ENCODE measurements at regions of chr10 and their contacts with region 1.

Region 1: GRCh38 chr10:103244663-103245271 is 920 bp upstream of the RPEL1 start:
- DNase-seq: peak; percentile 50 to 79
- ATAC-seq: peak; percentile 69 to 82
- H3K4me3 ChIP-seq: no peak overlapping the region
- H3K27ac ChIP-seq: no peak overlapping the region
- H3K4me1 ChIP-seq: peaks cover 19% of the 10 kb centered on the region in 2 donors
- H3K27me3 ChIP-seq: no peaks in the 10 kb centered on the region
- CTCF ChIP-seq: peak; percentile 90 to 91 (median 91)
- POLR2A ChIP-seq: no peak

Region 2: GRCh38 chr10:102713814-102714620 is 530.8 kb before region 1 on chr10 and contains the start of gene ARL3:
- in situ Hi-C with region 1: no loop called
- intact Hi-C with region 1: loop called (anchors 5 kb)
- DNase-seq: peak; percentile 96 to 97
- ATAC-seq: peak; percentile 88
- H3K4me3 ChIP-seq: peak within 1 kb of the TSS; percentile 74 to 99 (median 91)
- H3K27ac ChIP-seq: peak within 1 kb of the TSS; percentile 83 to 89 (median 86)
- H3K4me1 ChIP-seq: peaks cover 26 to 28% of the 10 kb centered on the region in 2 donors
- H3K27me3 ChIP-seq: no peaks in the 10 kb centered on the region
- CTCF ChIP-seq: peak; percentile 48 to 66 (median 61)
- POLR2A ChIP-seq: peak; percentile 58 to 70
- total RNA-seq, gene ARL3: 1.0 to 2.4 (median 1.5) TPM

Region 3: DNA sequence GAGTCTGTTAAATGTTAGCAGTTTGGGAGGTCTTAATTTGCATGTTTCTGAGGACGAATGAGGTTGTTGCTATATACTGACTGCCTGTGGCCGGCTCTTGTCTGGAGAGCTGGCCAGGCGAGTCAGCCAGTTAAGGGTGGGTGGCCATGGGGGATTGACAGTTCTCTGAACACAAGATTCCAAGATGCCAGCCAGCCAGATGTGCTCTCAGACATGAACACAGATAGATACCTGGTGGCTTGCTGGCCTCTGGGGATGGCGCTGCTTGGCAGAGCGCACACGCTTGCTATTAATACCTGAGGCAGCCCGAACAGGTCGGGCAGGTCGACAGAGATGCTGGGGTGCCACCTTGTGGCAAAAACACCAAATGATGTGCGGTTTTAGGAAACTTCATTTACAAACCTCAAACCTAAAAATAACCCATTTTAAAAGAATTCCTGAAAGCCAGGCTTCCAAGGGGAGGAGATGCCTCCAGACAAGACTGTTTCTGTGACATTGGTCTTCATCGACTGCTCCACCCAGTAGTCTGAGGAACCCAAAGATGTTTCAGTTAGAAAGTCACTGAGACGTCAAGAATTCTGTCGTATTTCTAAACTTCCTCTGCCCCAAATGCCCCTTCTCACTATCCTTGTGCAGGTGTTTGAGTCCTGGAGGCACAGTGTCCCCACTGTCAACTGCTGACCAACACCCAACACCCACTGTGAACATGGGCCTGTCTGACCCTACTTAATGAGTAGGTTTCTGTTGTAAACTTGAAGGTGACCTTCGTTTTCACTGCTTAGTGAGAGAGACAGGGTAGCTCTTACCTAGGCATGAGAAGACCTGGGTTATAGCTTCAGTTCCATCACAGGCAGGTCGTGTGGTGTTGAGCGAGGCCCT is 175.1 kb before region 1 on chr10:
- in situ Hi-C with region 1: loop called in 1 of 4 experiments (anchors 10 kb)
- intact Hi-C with region 1: no loop called
- DNase-seq: peak in 1 of 2 donors; percentile 49
- ATAC-seq: peak in 1 of 2 donors; percentile 66
- H3K4me3 ChIP-seq: no peak overlapping the region
- H3K27ac ChIP-seq: no peak overlapping the region
- H3K4me1 ChIP-seq: no peaks in the 10 kb centered on the region
- H3K27me3 ChIP-seq: no peaks in the 10 kb centered on the region
- CTCF ChIP-seq: peak; percentile 11 to 66 (median 58)
- POLR2A ChIP-seq: no peak

Region 4: GRCh38 chr10:103111031-103111917 is 133.5 kb before region 1 on chr10:
- in situ Hi-C with region 1: loop called in 1 of 4 experiments (anchors 25 kb)
- intact Hi-C with region 1: loop called (anchors 5 kb)
- DNase-seq: no peak
- ATAC-seq: peak; percentile 94 to 95
- H3K4me3 ChIP-seq: peak overlapping the region in 3 of 4 donors; percentile 8 to 48 (median 8)
- H3K27ac ChIP-seq: peak overlapping the region; percentile 79 to 92 (median 84)
- H3K4me1 ChIP-seq: peaks cover 86 to 87% of the 10 kb centered on the region in 2 donors
- H3K27me3 ChIP-seq: no peaks in the 10 kb centered on the region
- CTCF ChIP-seq: peak in 2 of 5 experiments; percentile 13 to 23
- POLR2A ChIP-seq: peak in 1 of 2 donors; percentile 5

Region 5: GRCh38 chr10:103666087-103666761 is 421.5 kb after region 1 on chr10:
- in situ Hi-C with region 1: no loop called
- intact Hi-C with region 1: no loop called
- DNase-seq: peak in 1 of 2 donors; percentile 54
- ATAC-seq: no peak
- H3K4me3 ChIP-seq: no peak overlapping the region
- H3K27ac ChIP-seq: peak overlapping the region in 1 of 4 donors; percentile 11
- H3K4me1 ChIP-seq: peaks cover 45 to 60% of the 10 kb centered on the region in 2 donors
- H3K27me3 ChIP-seq: no peaks in the 10 kb centered on the region
- CTCF ChIP-seq: peak in 4 of 5 experiments; percentile 19 to 53 (median 42)
- POLR2A ChIP-seq: no peak

Region 6: GRCh38 chr10:104387130-104387888 is 1142.5 kb after region 1 on chr10:
- in situ Hi-C with region 1: no loop called
- intact Hi-C with region 1: no loop called
- DNase-seq: no peak
- ATAC-seq: no peak
- H3K4me3 ChIP-seq: no peak overlapping the region
- H3K27ac ChIP-seq: no peak overlapping the region
- H3K4me1 ChIP-seq: no peaks in the 10 kb centered on the region
- H3K27me3 ChIP-seq: no peaks in the 10 kb centered on the region
- CTCF ChIP-seq: no peak
- POLR2A ChIP-seq: no peak

Measured in gastrocnemius medialis (tissue), 4 donors.